Heart right ventricle (tissue), 16 donors: ENCODE measurements at regions of chr5 and their contacts with region 1.

Region 1: GRCh38 chr5:136212252-136212721 is 19.3 kb upstream of the SMIM32 start:
- DNase-seq: peak; percentile 32 to 64
- ATAC-seq: peak in 5 of 8 donors; percentile 46 to 65 (median 54)
- H3K4me3 ChIP-seq: no peak overlapping the region
- H3K27ac ChIP-seq: no peak overlapping the region
- H3K4me1 ChIP-seq: no peaks in the 10 kb centered on the region
- H3K27me3 ChIP-seq: peaks cover 0 to 45% (median 27%) of the 10 kb centered on the region in 7 donors
- CTCF ChIP-seq: peak; percentile 58 to 95 (median 90)

Region 2: DNA sequence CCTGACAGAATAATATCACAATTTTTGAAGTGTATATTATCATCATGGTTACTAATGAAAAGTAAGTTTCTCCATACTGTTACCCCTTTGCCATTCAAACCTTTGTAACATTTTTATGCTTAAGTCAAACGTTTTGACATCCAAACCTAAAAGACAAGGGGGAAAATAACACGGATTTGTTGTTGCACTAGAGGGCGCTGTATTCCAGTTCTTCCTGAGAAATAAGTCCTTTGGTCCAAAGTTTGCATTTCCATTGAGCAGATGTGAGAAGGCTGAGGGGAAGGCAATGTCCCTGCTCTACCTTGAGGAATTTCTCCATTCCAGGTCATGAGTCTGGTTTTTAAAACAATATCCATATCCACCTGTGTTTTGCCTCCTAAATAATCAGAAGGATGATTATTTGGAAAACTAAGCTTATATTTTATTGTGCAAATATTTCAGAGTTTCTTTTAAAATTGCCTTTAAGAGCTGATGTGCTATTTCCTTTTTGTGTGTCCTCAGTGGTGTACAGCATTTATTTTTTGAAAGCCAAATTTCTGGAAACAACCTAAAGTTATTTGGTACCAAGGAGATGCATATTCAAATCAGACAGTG is 267.2 kb before region 1 on chr5:
- intact Hi-C with region 1: loop called in 9 of 10 experiments (anchors 1 to 10 kb)
- DNase-seq: peak in 1 of 2 donors; percentile 68
- ATAC-seq: peak in 5 of 8 donors; percentile 55 to 76 (median 68)
- H3K4me3 ChIP-seq: no peak overlapping the region
- H3K27ac ChIP-seq: no peak overlapping the region
- H3K4me1 ChIP-seq: peaks cover 0 to 8% (median 0%) of the 10 kb centered on the region in 9 donors
- H3K27me3 ChIP-seq: peaks cover 0 to 19% (median 0%) of the 10 kb centered on the region in 7 donors
- CTCF ChIP-seq: peak; percentile 67 to 89 (median 79)

Region 3: DNA sequence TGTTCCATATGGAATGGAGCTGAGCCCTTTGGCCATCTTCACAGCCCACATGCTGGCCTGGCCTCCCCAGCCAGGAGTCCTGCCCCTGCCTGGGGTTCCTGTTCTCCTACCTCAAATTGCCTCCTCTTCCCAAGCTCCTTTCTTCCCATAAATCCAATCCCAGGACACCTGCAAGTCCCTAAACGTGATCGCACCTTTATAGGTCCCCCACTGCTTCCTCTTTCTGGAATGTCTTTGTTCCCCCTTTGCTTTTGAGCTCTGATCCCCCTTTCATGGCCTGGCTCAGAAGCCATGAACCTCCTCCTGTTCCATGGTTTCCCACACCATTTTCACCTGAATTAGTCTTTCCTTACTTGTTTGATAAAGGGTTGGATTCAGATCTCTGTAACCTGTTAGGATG is 84.6 kb after region 1 on chr5:
- intact Hi-C with region 1: no loop called
- DNase-seq: no peak
- ATAC-seq: no peak
- H3K4me3 ChIP-seq: no peak overlapping the region
- H3K27ac ChIP-seq: no peak overlapping the region
- H3K4me1 ChIP-seq: no peaks in the 10 kb centered on the region
- H3K27me3 ChIP-seq: peaks cover 0 to 5% (median 0%) of the 10 kb centered on the region in 7 donors
- CTCF ChIP-seq: no peak